ENCODE measurements at regions of chr3 and their contacts with region 1.

Region 1: GRCh38 chr3:15268033-15268631 is 62.1 kb downstream of the CAPN7 start:
- DNase-seq: peak; percentile 46
- ATAC-seq: peak; percentile 86
- H3K4me3 ChIP-seq: no peak overlapping the region
- H3K27ac ChIP-seq: peak overlapping the region; percentile 7; the same call in 1 of the 2 replicates
- H3K4me1 ChIP-seq: peaks cover 18% of the 10 kb centered on the region
- H3K27me3 ChIP-seq: no peaks in the 10 kb centered on the region
- CTCF ChIP-seq: peak; percentile 93

Region 2: DNA sequence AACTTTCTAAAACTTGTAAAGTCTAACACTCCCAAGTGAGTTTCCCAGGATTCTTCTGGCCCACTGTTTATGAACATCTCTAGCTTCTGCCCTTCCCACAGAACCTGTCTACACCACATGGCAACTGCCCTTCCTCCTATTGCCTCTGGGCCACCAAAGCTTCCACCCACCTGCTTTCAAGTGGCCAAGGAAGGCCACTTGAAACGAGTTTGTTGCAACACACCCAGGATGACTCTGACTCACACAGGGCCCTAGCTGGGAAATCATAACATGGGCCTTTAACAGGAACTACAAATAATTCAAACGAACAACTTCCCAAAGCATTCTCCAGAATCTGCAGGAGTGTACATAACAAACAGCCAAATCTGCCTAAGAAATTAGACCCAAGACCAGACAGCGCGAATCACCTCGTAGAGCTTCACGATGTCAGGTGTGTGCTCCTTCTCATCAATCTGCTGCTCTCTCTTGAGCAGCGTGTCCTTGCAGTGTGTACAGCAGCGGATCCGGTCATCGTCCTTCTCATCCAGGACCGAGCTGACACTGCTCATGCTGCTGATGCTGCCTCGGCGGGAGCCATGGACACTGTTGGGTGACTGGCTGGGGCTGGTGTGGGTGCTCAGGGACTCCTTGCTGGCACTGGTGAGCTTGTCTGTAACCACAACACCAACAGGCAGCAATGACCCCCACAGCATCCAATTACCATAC is 186.0 kb before region 1 on chr3:
- CTCF ChIA-PET with region 1: no interaction called
- POLR2A ChIA-PET with region 1: no interaction called
- in situ Hi-C with region 1: no loop called
- intact Hi-C with region 1: no loop called
- DNase-seq: no peak
- ATAC-seq: no peak
- H3K4me3 ChIP-seq: no peak overlapping the region
- H3K27ac ChIP-seq: no peak overlapping the region
- H3K4me1 ChIP-seq: no peaks in the 10 kb centered on the region
- H3K27me3 ChIP-seq: no peaks in the 10 kb centered on the region
- CTCF ChIP-seq: no peak

Region 3: DNA sequence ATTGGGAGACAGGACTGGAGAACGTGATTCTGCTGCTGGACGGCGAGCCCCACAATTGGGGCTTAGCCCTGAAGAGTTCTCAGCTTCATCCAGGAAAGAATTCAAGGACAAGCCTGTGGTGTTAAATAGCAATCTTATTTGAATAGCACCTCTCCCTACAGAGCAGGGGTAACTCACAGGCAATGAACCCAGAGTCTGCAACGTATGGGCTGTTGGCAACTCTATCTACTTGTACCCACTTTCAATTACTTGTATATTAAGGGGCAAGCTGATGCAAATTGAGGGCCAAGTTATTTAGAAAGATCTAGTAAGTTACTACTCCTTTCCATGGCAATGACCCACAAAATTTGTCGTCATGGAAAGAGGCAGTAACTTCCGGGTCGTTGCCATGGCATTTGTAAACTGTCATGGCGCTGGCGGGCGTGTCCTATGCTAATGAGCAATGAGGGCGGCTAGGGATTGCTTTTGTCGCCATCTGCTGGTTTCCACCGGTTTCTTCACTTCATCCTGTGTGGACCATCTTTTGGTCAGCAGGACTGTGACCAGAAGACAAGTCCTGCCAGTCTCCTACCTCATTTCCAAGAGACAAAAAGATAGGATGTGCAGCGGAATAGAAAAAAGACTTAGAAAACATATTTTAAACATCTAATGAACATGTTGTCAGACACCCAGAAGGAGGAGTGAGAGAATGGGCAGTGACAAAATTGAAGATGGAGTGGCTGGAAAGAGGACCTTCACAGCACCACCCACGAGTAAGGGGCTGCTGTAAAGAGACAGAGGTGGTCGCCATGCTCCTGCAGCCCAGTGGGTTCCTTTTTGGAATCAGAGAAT is 110.0 kb after region 1 on chr3:
- CTCF ChIA-PET with region 1: no interaction called
- POLR2A ChIA-PET with region 1: interaction called, 9 read pairs
- in situ Hi-C with region 1: no loop called
- intact Hi-C with region 1: loop called (anchors 1 kb)
- DNase-seq: peak; percentile 75
- ATAC-seq: peak; percentile 98
- H3K4me3 ChIP-seq: peak overlapping the region in 1 of 2 experiments; percentile 13; a peak in 1 of 4 replicates
- H3K27ac ChIP-seq: 0 out of 2 replicates have a peak overlapping the region, but pooled peaks have one; percentile 39
- H3K4me1 ChIP-seq: no peaks in the 10 kb centered on the region
- H3K27me3 ChIP-seq: no peaks in the 10 kb centered on the region
- CTCF ChIP-seq: peak; percentile 83

Region 4: DNA sequence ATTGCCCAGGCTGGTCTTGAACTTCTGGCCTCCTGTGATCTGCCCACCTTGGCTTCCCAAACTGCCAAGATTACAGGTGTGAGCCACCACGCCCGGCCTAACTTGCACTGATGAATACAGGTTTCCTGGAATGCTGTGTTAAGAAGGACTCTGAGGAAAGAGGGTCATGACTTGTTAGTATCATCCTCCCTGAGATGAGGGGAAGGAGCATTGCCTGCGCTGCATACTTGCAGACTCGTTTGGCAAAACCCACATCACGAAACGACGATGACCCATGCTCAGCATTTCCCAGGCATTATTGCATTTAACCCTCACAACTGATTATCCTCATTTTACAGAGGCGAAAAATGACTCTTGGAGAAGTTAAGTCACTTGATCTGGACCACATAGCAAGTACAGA is 234.5 kb after region 1 on chr3:
- CTCF ChIA-PET with region 1: no interaction called
- POLR2A ChIA-PET with region 1: no interaction called
- in situ Hi-C with region 1: no loop called
- intact Hi-C with region 1: no loop called
- DNase-seq: no peak
- ATAC-seq: no peak
- H3K4me3 ChIP-seq: no peak overlapping the region
- H3K27ac ChIP-seq: no peak overlapping the region
- H3K4me1 ChIP-seq: no peaks in the 10 kb centered on the region
- H3K27me3 ChIP-seq: no peaks in the 10 kb centered on the region
- CTCF ChIP-seq: no peak

Region 5: DNA sequence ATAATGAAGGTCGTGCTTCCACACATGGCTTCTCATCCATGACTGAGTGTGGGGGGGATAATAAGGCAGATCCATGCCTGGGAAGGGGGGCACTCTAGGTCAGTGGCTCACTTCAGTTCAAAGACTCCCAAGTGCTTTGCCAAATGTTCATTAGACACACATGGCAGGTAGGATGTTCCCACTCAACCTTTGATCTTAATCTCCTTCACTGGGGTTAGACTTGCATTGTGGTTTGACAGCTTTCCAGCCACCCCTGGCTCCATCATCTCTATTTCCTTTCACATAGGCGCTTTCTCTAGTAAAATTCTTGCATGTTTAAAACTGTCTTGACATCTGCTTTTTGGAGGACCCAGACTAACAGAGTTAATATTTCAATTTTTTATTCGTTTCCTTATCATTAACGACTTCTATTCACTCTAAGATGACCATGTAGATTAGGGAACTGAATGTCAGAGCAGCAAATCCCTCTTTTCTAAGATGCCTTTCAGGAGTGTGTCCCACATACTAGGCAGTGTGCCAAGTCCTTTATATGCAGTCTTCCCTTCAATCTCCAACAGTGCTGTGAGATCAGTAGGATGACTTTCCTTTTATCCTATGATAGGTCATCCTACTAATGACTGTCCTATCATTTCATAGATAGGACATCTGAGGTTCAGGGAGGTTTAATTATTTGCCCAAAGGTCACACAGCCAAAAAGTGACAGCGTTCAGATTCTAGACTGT is 391.3 kb after region 1 on chr3:
- CTCF ChIA-PET with region 1: no interaction called
- POLR2A ChIA-PET with region 1: no interaction called
- in situ Hi-C with region 1: no loop called
- intact Hi-C with region 1: no loop called
- DNase-seq: no peak
- ATAC-seq: no peak
- H3K4me3 ChIP-seq: no peak overlapping the region
- H3K27ac ChIP-seq: peak overlapping the region; percentile 79
- H3K4me1 ChIP-seq: no peaks in the 10 kb centered on the region
- H3K27me3 ChIP-seq: no peaks in the 10 kb centered on the region
- CTCF ChIP-seq: no peak